HAP-1 (cell line): ENCODE measurements at regions of chr7 and their contacts with region 1.

Region 1: GRCh38 chr7:116259871-116260440 is 49.6 kb downstream of the TES start:
- DNase-seq: no peak
- H3K4me3 ChIP-seq: no peak overlapping the region
- H3K4me1 ChIP-seq: no peaks in the 10 kb centered on the region
- H3K27me3 ChIP-seq: no peaks in the 10 kb centered on the region

Region 2: GRCh38 chr7:116582806-116583444 is 323.0 kb after region 1 on chr7:
- in situ Hi-C with region 1: loop called (anchors 5 kb)
- DNase-seq: no peak
- H3K4me3 ChIP-seq: no peak overlapping the region
- H3K4me1 ChIP-seq: no peaks in the 10 kb centered on the region
- H3K27me3 ChIP-seq: no peaks in the 10 kb centered on the region